Endothelial cell of umbilical vein (primary cell): ENCODE measurements at regions of chr10 and their contacts with region 1.

Region 1: DNA sequence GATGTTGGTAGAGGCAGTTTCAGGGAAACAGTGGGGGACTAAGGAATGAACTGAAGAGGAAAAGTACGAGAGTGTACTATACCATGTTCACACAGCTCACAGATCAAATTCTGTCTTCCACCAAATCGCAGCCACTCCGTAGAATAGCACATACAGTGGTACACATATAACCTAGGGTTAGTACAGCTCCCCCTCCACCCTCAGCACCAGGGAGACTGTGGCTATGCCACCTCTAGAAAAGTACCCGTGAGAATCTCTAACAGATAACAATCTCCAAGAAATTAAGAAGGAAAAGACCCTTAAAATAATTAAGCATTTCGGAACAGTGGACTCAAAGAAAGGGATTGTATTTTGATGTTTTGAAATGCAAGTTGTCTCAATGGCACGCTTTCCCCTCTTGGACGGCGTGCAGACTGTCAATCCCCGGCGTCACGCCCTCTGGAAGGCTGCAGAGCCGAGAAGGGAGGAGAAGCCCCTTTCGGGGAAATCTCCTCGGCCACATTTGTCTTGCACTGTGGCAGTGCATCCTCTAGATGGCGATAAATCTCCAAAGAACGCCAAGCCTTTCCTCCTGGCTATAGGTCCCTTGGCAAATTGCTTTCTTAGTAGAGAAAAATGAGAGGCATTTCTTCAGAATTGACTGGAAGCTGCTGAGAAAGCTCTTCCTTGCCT is 345.0 kb downstream of the REEP3 start:
- DNase-seq: peak; percentile 61
- H3K4me3 ChIP-seq: no peak overlapping the region
- H3K27ac ChIP-seq: no peak overlapping the region
- H3K4me1 ChIP-seq: no peaks in the 10 kb centered on the region
- H3K27me3 ChIP-seq: peaks cover 23 to 25% of the 10 kb centered on the region in 2 experiments
- CTCF ChIP-seq: peak; percentile 78 to 88
- POLR2A ChIP-seq: no peak

Region 2: GRCh38 chr10:63843108-63843507 is 23.1 kb before region 1 on chr10:
- CTCF ChIA-PET with region 1: interaction called, 14 read pairs
- POLR2A ChIA-PET with region 1: no interaction called
- dilution Hi-C with region 1: no loop called
- intact Hi-C with region 1: no loop called
- DNase-seq: no peak
- H3K4me3 ChIP-seq: no peak overlapping the region
- H3K27ac ChIP-seq: no peak overlapping the region
- H3K4me1 ChIP-seq: no peaks in the 10 kb centered on the region
- H3K27me3 ChIP-seq: peaks cover 0 to 4% of the 10 kb centered on the region in 2 experiments
- CTCF ChIP-seq: no peak
- POLR2A ChIP-seq: no peak

Region 3: DNA sequence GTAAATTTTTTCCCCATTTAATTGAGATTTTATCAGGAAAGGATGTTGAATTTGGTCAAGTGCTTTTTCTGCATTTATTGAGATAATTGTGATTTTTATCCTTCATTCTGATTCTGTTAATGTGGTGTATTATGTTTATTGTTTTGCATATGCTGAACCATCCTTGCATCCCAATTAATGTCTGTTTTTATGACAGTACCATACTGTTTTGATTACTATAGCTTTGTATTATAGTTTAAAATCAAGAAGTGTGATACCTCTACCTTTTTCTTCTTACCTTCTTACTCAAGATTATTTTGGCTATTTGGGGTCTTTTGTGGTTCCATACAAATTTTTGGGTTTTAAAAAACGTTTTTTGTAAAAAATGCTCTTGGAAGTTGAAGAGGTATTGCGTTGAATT is 12.2 kb after region 1 on chr10:
- CTCF ChIA-PET with region 1: interaction called, 11 read pairs
- POLR2A ChIA-PET with region 1: no interaction called
- dilution Hi-C with region 1: no loop called
- intact Hi-C with region 1: no loop called
- DNase-seq: no peak
- H3K4me3 ChIP-seq: no peak overlapping the region
- H3K27ac ChIP-seq: no peak overlapping the region
- H3K4me1 ChIP-seq: no peaks in the 10 kb centered on the region
- H3K27me3 ChIP-seq: no peaks in the 10 kb centered on the region
- CTCF ChIP-seq: no peak
- POLR2A ChIP-seq: no peak

Region 4: DNA sequence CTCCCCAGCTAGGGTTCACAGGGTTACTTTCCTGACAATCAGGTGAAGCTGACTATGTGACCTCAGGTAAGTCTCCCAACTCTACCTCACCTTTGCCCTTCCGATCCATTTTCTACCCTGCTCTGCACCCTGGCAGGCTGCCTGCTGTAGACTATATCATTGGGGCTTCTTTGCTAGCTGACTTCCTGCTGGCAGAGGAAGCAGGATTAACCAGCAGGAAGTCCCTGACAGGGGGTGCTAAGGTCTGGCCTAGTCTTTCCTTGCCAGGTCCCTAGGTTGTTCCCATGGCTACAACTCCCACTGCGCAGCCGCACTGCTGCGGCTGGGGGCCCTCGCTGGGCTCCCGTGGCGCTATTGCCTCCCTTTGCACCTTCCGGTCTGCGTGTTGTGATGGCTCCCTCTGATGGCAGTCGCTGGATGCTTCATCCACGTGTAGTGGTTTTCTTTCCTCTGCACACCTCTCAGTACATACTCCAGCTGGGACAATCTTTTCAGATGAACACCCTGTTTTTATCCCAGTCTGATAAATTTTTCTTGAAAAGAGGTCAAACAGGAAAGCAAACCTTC is 20.9 kb after region 1 on chr10:
- CTCF ChIA-PET with region 1: interaction called, 10 read pairs
- POLR2A ChIA-PET with region 1: no interaction called
- dilution Hi-C with region 1: no loop called
- intact Hi-C with region 1: no loop called
- DNase-seq: no peak
- H3K4me3 ChIP-seq: no peak overlapping the region
- H3K27ac ChIP-seq: no peak overlapping the region
- H3K4me1 ChIP-seq: no peaks in the 10 kb centered on the region
- H3K27me3 ChIP-seq: no peaks in the 10 kb centered on the region
- CTCF ChIP-seq: no peak
- POLR2A ChIP-seq: no peak

Region 5: DNA sequence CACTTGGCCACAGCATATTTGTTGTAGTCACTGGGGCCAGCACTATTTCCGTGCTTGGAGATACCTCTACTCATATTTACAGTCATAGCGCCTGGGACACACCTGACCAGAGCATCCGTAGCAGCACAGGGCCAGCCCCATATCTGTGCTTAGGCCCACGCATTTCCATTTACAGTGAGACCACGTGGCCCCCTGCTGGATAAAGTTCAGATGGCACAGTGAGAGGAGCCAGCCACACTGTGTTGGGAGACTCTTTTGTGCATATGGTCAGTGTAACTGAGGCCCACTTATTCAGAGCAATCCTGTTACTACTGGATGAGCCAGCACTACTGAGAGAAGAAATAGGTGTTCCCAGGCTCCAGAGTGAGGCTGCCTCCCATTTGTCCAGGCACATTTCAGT is 110.3 kb after region 1 on chr10:
- CTCF ChIA-PET with region 1: interaction called, 58 read pairs
- POLR2A ChIA-PET with region 1: no interaction called
- dilution Hi-C with region 1: no loop called
- intact Hi-C with region 1: loop called (anchors 1 kb)
- DNase-seq: peak; percentile 39
- H3K4me3 ChIP-seq: no peak overlapping the region
- H3K27ac ChIP-seq: no peak overlapping the region
- H3K4me1 ChIP-seq: no peaks in the 10 kb centered on the region
- H3K27me3 ChIP-seq: no peaks in the 10 kb centered on the region
- CTCF ChIP-seq: peak; percentile 51 to 69
- POLR2A ChIP-seq: no peak

Region 6: GRCh38 chr10:64101606-64102263 is 235.5 kb after region 1 on chr10:
- CTCF ChIA-PET with region 1: no interaction called
- POLR2A ChIA-PET with region 1: no interaction called
- dilution Hi-C with region 1: no loop called
- intact Hi-C with region 1: no loop called
- DNase-seq: no peak
- H3K4me3 ChIP-seq: no peak overlapping the region
- H3K27ac ChIP-seq: no peak overlapping the region
- H3K4me1 ChIP-seq: no peaks in the 10 kb centered on the region
- H3K27me3 ChIP-seq: no peaks in the 10 kb centered on the region
- CTCF ChIP-seq: no peak
- POLR2A ChIP-seq: no peak